CD14-positive monocyte (primary cell): ENCODE measurements at regions of chr16 and their contacts with region 1.

Region 1: GRCh38 chr16:10256784-10257641 is 74.8 kb upstream of the GRIN2A start:
- DNase-seq: peak; percentile 21 to 45 (median 31)
- H3K4me3 ChIP-seq: no peak overlapping the region
- H3K4me3 Mint-ChIP-seq: no peak overlapping the region
- H3K27ac ChIP-seq: no peak overlapping the region
- H3K27ac Mint-ChIP-seq: no peak overlapping the region
- H3K4me1 ChIP-seq: no peaks in the 10 kb centered on the region
- H3K4me1 Mint-ChIP-seq: peaks cover 6% of the 10 kb centered on the region
- H3K27me3 ChIP-seq: no peaks in the 10 kb centered on the region
- H3K27me3 Mint-ChIP-seq: peaks cover 3 to 6% (median 3%) of the 10 kb centered on the region in 3 donors
- CTCF ChIP-seq: peak; percentile 81

Region 2: DNA sequence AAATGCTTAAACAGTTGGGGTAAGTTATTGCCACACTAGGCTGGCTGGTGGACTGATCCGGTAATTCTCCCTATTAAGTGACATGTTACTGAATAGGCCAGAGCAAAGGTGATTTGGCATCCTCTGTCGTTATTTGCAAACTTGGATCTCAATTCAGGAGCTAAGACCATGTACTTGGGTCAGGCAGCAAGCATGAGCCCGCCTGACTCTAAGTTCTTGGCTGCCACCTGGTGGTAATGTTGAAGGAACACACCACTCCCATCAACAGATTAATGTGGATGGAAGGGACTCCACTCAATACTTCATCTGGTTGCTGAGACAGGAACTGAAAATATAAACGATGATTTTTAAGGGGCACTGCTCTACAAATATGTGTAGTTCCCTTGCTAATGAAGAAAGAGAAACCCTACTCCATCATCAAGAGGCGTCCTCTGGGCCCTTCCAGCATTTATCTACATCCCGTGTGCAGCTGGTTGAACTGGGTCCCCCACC is 252.6 kb after region 1 on chr16:
- intact Hi-C with region 1: loop called (anchors 1 to 2 kb)
- DNase-seq: peak; percentile 53 to 74 (median 71)
- H3K4me3 ChIP-seq: no peak overlapping the region
- H3K4me3 Mint-ChIP-seq: no peak overlapping the region
- H3K27ac ChIP-seq: no peak overlapping the region
- H3K27ac Mint-ChIP-seq: no peak overlapping the region
- H3K4me1 ChIP-seq: peaks cover 4 to 5% of the 10 kb centered on the region in 2 donors
- H3K4me1 Mint-ChIP-seq: peaks cover 8% of the 10 kb centered on the region
- H3K27me3 ChIP-seq: no peaks in the 10 kb centered on the region
- H3K27me3 Mint-ChIP-seq: peaks cover 0 to 1% (median 1%) of the 10 kb centered on the region in 3 donors
- CTCF ChIP-seq: peak; percentile 86

Region 3: GRCh38 chr16:10729104-10730048 is 472.4 kb after region 1 on chr16:
- intact Hi-C with region 1: loop called in 1 of 2 experiments (anchors 5 kb)
- DNase-seq: no peak
- H3K4me3 ChIP-seq: no peak overlapping the region
- H3K4me3 Mint-ChIP-seq: no peak overlapping the region
- H3K27ac ChIP-seq: no peak overlapping the region
- H3K27ac Mint-ChIP-seq: peak overlapping the region in 1 of 7 donors; percentile 6
- H3K4me1 ChIP-seq: no peaks in the 10 kb centered on the region
- H3K4me1 Mint-ChIP-seq: no peaks in the 10 kb centered on the region
- H3K27me3 ChIP-seq: no peaks in the 10 kb centered on the region
- H3K27me3 Mint-ChIP-seq: no peaks in the 10 kb centered on the region
- CTCF ChIP-seq: no peak

Region 4: GRCh38 chr16:10737068-10737625 is 480.1 kb after region 1 on chr16:
- intact Hi-C with region 1: loop called (anchors 2 to 5 kb)
- DNase-seq: peak; percentile 65 to 78 (median 73)
- H3K4me3 ChIP-seq: peak overlapping the region in 1 of 3 experiments; percentile 56
- H3K4me3 Mint-ChIP-seq: peak overlapping the region; percentile 64 to 76
- H3K27ac ChIP-seq: peak overlapping the region in 1 of 2 donors; percentile 54
- H3K27ac Mint-ChIP-seq: peak overlapping the region in 6 of 7 donors; percentile 35 to 93 (median 82)
- H3K4me1 ChIP-seq: peaks cover 24 to 26% of the 10 kb centered on the region in 2 donors
- H3K4me1 Mint-ChIP-seq: peaks cover 20% of the 10 kb centered on the region
- H3K27me3 ChIP-seq: no peaks in the 10 kb centered on the region
- H3K27me3 Mint-ChIP-seq: peaks cover 0 to 5% (median 2%) of the 10 kb centered on the region in 3 donors
- CTCF ChIP-seq: peak; percentile 95

Region 5: GRCh38 chr16:10918294-10919002 is 661.4 kb after region 1 on chr16:
- intact Hi-C with region 1: loop called in 1 of 2 experiments (anchors 5 kb)
- DNase-seq: peak; percentile 80 to 89 (median 82)
- H3K4me3 ChIP-seq: no peak overlapping the region
- H3K4me3 Mint-ChIP-seq: no peak overlapping the region
- H3K27ac ChIP-seq: peak overlapping the region in 1 of 2 donors; percentile 60
- H3K27ac Mint-ChIP-seq: peak overlapping the region in 5 of 7 donors; percentile 16 to 79 (median 70)
- H3K4me1 ChIP-seq: peaks cover 9 to 14% of the 10 kb centered on the region in 2 donors
- H3K4me1 Mint-ChIP-seq: peaks cover 17% of the 10 kb centered on the region
- H3K27me3 ChIP-seq: no peaks in the 10 kb centered on the region
- H3K27me3 Mint-ChIP-seq: no peaks in the 10 kb centered on the region
- CTCF ChIP-seq: peak; percentile 90